ENCODE measurements at regions of chr3 and their contacts with region 1.

Region 1: GRCh38 chr3:182258538-182259177 is 534.6 kb upstream of the ATP11B start:
- DNase-seq: peak; percentile 78
- H3K4me3 ChIP-seq: no peak overlapping the region
- H3K27ac ChIP-seq: no peak overlapping the region
- H3K4me1 ChIP-seq: peaks cover 7% of the 10 kb centered on the region
- H3K27me3 ChIP-seq: no peaks in the 10 kb centered on the region
- CTCF ChIP-seq: peak; percentile 77

Region 2: GRCh38 chr3:180802837-180803236 is 1455.8 kb before region 1 on chr3:
- CTCF ChIA-PET with region 1: no interaction called
- POLR2A ChIA-PET with region 1: no interaction called
- intact Hi-C with region 1: loop called (anchors 10 kb)
- DNase-seq: peak; percentile 39
- H3K4me3 ChIP-seq: no peak overlapping the region
- H3K27ac ChIP-seq: no peak overlapping the region
- H3K4me1 ChIP-seq: no peaks in the 10 kb centered on the region
- H3K27me3 ChIP-seq: peaks cover 6% of the 10 kb centered on the region
- CTCF ChIP-seq: peak; percentile 64

Region 3: DNA sequence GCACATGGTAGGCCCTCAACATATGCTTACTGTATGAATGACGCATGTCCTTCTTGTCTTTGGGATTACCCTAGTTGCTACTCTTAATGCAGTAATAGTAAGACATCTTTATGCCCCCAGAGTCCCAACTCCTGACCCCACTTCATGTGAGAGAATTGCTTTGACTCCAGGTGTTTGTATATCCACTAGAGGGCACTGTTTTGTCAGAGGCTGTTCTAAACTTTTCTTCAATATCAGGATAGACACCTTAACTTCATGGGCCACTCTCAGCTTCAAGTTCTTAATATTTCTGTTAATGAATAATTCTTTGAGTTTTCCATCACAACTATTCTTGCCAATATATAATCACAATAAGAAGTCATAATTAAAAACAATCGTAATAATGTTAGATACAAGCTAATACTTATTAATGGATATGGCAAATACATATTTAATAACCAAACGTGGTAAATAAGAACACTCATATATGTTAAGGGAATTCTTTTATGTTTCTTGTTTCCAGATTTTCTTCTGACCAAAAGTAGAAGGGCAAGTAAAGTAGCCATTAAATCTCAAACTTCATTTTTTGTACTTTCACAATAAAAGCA is 931.9 kb before region 1 on chr3:
- CTCF ChIA-PET with region 1: no interaction called
- POLR2A ChIA-PET with region 1: no interaction called
- intact Hi-C with region 1: loop called (anchors 5 kb)
- DNase-seq: peak; percentile 55
- H3K4me3 ChIP-seq: no peak overlapping the region
- H3K27ac ChIP-seq: no peak overlapping the region
- H3K4me1 ChIP-seq: no peaks in the 10 kb centered on the region
- H3K27me3 ChIP-seq: peaks cover 14% of the 10 kb centered on the region
- CTCF ChIP-seq: peak; percentile 80

Region 4: GRCh38 chr3:181752202-181752671 is 506.4 kb before region 1 on chr3:
- CTCF ChIA-PET with region 1: no interaction called
- POLR2A ChIA-PET with region 1: no interaction called
- intact Hi-C with region 1: no loop called
- DNase-seq: no peak
- H3K4me3 ChIP-seq: no peak overlapping the region
- H3K27ac ChIP-seq: no peak overlapping the region
- H3K4me1 ChIP-seq: peaks cover 19% of the 10 kb centered on the region
- H3K27me3 ChIP-seq: no peaks in the 10 kb centered on the region
- CTCF ChIP-seq: no peak

Region 5: DNA sequence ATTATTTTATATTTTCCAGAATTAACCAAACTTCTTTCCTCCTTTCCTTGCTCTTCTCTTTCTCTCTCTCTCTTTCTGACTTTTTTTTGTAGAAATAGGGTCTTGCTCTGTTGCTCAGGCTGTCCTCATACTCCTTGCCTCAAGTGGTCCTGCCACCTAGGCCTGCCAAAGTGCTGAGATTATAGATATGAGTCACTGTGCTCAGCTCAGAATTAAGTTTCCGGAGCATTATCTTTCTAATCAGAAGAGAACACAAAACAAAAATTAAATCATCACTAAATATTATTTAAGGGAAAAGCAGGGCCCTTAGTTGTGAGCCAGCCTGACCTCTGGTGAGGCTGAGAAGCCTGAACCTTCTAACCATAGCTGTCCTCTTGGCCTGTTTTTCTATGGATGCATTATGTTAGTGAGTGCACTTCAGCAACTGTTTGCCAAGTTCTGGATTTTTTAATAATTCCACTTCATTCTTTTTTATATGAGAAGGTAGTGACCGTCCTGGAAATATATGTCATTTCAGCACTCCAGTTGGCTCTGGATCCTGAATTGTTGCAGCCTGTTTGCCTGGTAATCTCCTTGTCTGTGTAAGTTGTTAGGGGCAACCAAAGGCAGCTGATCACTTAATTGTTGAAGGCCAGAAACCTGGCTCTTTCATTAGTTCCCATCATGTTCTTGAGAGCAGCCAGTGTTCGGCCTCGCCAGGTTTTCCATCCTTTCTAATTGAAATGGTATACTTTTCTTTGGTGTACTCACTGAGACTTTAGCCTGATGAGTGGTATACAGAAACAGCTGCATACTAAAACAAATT is 378.5 kb before region 1 on chr3:
- CTCF ChIA-PET with region 1: no interaction called
- POLR2A ChIA-PET with region 1: no interaction called
- intact Hi-C with region 1: loop called (anchors 10 kb)
- DNase-seq: peak; percentile 44
- H3K4me3 ChIP-seq: no peak overlapping the region
- H3K27ac ChIP-seq: no peak overlapping the region
- H3K4me1 ChIP-seq: peaks cover 5% of the 10 kb centered on the region
- H3K27me3 ChIP-seq: no peaks in the 10 kb centered on the region
- CTCF ChIP-seq: no peak

Region 6: DNA sequence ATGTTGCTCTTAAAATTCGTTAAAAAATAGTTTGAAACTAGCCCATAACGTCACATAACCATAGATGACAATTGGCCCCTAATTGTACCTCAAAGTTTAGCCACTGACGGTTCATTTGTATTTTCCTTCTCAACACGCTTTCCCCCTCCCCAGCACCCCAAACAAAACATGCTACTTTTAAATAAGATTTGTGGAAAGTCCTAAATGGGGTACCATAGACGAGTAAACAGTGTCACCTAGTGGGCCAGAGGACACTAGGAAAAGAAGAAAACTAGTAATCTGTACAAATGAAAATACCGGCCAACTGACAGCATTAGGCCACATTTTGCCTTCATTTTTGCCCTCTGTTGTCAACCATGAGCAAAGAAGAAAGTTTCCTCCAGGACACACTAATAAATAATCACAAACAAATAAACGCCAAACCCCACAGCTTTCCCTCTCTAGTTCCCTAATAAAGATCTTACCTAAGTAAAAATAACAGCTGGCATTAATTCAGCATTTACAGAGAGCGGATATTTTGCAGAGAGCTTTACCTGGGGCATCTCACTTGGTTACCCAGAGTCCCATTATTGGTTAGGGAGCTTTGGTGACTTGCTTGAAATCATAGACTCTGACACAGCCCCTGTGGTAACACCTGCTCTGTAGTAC is 359.6 kb after region 1 on chr3:
- CTCF ChIA-PET with region 1: no interaction called
- POLR2A ChIA-PET with region 1: no interaction called
- intact Hi-C with region 1: loop called (anchors 10 kb)
- DNase-seq: peak; percentile 66
- H3K4me3 ChIP-seq: no peak overlapping the region
- H3K27ac ChIP-seq: no peak overlapping the region
- H3K4me1 ChIP-seq: no peaks in the 10 kb centered on the region
- H3K27me3 ChIP-seq: no peaks in the 10 kb centered on the region
- CTCF ChIP-seq: peak; percentile 71

Region 7: GRCh38 chr3:182683453-182683852 is 424.8 kb after region 1 on chr3:
- CTCF ChIA-PET with region 1: no interaction called
- POLR2A ChIA-PET with region 1: no interaction called
- intact Hi-C with region 1: loop called (anchors 5 kb)
- DNase-seq: peak; percentile 84
- H3K4me3 ChIP-seq: peak overlapping the region; percentile 61
- H3K27ac ChIP-seq: no peak overlapping the region
- H3K4me1 ChIP-seq: peaks cover 12% of the 10 kb centered on the region
- H3K27me3 ChIP-seq: peaks cover 28% of the 10 kb centered on the region
- CTCF ChIP-seq: peak; percentile 96